ENCODE measurements at regions of chr9 and their contacts with region 1.

Region 1: GRCh38 chr9:72443855-72444254 is 77.6 kb upstream of the TMC1 start:
- DNase-seq: peak in 1 of 5 donors; percentile 8
- ATAC-seq: peak in 3 of 4 donors; percentile 53 to 65 (median 61)
- H3K4me3 ChIP-seq: no peak overlapping the region
- H3K27ac ChIP-seq: peak overlapping the region in 1 of 12 donors; percentile 85
- H3K4me1 ChIP-seq: peaks cover 0 to 71% (median 0%) of the 10 kb centered on the region in 12 donors
- H3K27me3 ChIP-seq: no peaks in the 10 kb centered on the region
- CTCF ChIP-seq: no peak
- POLR2A ChIP-seq: no peak

Region 2: GRCh38 chr9:72383978-72384709 is 59.7 kb before region 1 on chr9:
- intact Hi-C with region 1: no loop called
- DNase-seq: no peak
- ATAC-seq: no peak
- H3K4me3 ChIP-seq: no peak overlapping the region
- H3K27ac ChIP-seq: peak overlapping the region in 1 of 12 donors; percentile 2
- H3K4me1 ChIP-seq: no peaks in the 10 kb centered on the region
- H3K27me3 ChIP-seq: no peaks in the 10 kb centered on the region
- CTCF ChIP-seq: no peak
- POLR2A ChIP-seq: no peak

Region 3: DNA sequence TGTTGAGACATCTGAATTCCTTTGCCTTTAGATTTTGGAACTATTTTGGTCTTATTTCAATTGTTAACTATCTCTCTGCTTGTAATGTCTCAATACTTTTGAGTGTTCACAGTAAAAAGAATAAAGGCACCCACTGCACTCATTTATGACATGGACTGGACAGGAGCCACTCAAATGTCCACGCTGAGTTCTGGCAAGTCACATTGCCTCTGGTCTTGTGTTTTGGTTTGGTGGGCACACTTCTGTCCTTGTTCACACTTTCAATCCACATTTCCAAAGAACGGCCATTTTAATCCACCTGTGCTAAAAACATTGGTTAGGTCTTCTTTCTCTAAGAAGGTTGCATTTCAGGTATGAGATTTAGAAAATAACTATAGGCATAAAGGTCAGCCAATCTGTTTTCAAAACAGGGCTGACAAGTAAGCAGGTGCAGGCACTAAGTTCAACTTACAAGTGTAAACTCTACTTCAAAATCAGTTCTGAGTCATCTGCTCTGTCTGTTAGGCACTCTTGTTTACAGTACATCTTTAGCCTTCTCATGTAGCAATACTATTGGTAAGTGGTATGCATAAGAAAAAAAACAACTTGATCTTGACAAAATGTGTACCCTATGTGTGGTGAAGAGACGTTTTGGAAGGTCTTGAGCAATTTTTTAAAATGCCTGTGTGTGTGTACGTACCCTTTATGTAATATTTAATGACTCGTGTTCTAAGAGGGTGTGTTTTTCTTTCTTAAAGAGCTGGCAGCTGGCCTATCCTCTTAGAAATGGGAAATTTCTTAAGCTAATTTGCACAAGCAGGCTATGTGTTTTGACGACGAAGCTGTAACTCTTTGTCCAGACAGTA is 47.4 kb before region 1 on chr9:
- intact Hi-C with region 1: loop called in 1 of 10 experiments (anchors 10 kb)
- DNase-seq: no peak
- ATAC-seq: no peak
- H3K4me3 ChIP-seq: no peak overlapping the region
- H3K27ac ChIP-seq: peak overlapping the region in 2 of 12 donors; percentile 5 to 36
- H3K4me1 ChIP-seq: peaks cover 0 to 19% (median 0%) of the 10 kb centered on the region in 12 donors
- H3K27me3 ChIP-seq: no peaks in the 10 kb centered on the region
- CTCF ChIP-seq: no peak
- POLR2A ChIP-seq: no peak

Measured in heart left ventricle (tissue), 16 donors.